Naive thymus-derived CD4-positive, alpha-beta T cell (primary cell): ENCODE measurements at regions of chr7 and their contacts with region 1.

Region 1: GRCh38 chr7:152336754-152337368 is 98.9 kb downstream of the KMT2C start:
- DNase-seq: peak in 7 of 9 donors; percentile 13 to 42 (median 34)
- ATAC-seq: peak; percentile 88
- H3K4me3 ChIP-seq: peak overlapping the region; percentile 27
- H3K4me3 Mint-ChIP-seq: peak overlapping the region in 8 of 10 donors; percentile 49 to 88 (median 84)
- H3K27ac ChIP-seq: peak overlapping the region; percentile 55
- H3K27ac Mint-ChIP-seq: peak overlapping the region in 8 of 9 donors; percentile 34 to 86 (median 73)
- H3K4me1 ChIP-seq: peaks cover 15 to 19% of the 10 kb centered on the region in 2 donors
- H3K4me1 Mint-ChIP-seq: peaks cover 38 to 85% (median 68%) of the 10 kb centered on the region in 7 donors
- H3K27me3 ChIP-seq: no peaks in the 10 kb centered on the region
- H3K27me3 Mint-ChIP-seq: no peaks in the 10 kb centered on the region

Region 2: GRCh38 chr7:152463709-152464311 is 126.9 kb after region 1 on chr7:
- CTCF ChIA-PET with region 1: interaction called, 4 read pairs
- POLR2A ChIA-PET with region 1: interaction called, 4 read pairs
- intact Hi-C with region 1: loop called (anchors 1 kb)
- DNase-seq: peak; percentile 99 to 100 (median 100)
- ATAC-seq: peak; percentile 96
- H3K4me3 ChIP-seq: peak overlapping the region; percentile 82
- H3K4me3 Mint-ChIP-seq: peak overlapping the region; percentile 64 to 96 (median 92)
- H3K27ac ChIP-seq: peak overlapping the region; percentile 99
- H3K27ac Mint-ChIP-seq: peak overlapping the region in 7 of 9 donors; percentile 62 to 93 (median 88)
- H3K4me1 ChIP-seq: peaks cover 5% of the 10 kb centered on the region in 2 donors
- H3K4me1 Mint-ChIP-seq: peaks cover 5 to 17% (median 7%) of the 10 kb centered on the region in 7 donors
- H3K27me3 ChIP-seq: no peaks in the 10 kb centered on the region
- H3K27me3 Mint-ChIP-seq: no peaks in the 10 kb centered on the region

Region 3: GRCh38 chr7:152512706-152513105 is 175.8 kb after region 1 on chr7:
- CTCF ChIA-PET with region 1: interaction called, 4 read pairs
- POLR2A ChIA-PET with region 1: interaction called, 3 read pairs
- intact Hi-C with region 1: loop called in 1 of 2 experiments (anchors 2 kb)
- DNase-seq: peak in 7 of 9 donors; percentile 19 to 54 (median 31)
- ATAC-seq: peak; percentile 79
- H3K4me3 ChIP-seq: peak overlapping the region; percentile 39
- H3K4me3 Mint-ChIP-seq: peak overlapping the region; percentile 58 to 87 (median 78)
- H3K27ac ChIP-seq: peak overlapping the region; percentile 2
- H3K27ac Mint-ChIP-seq: peak overlapping the region in 7 of 9 donors; percentile 15 to 77 (median 51)
- H3K4me1 ChIP-seq: peaks cover 0 to 4% of the 10 kb centered on the region in 2 donors
- H3K4me1 Mint-ChIP-seq: peaks cover 4 to 20% (median 13%) of the 10 kb centered on the region in 7 donors
- H3K27me3 ChIP-seq: no peaks in the 10 kb centered on the region
- H3K27me3 Mint-ChIP-seq: peaks cover 0 to 4% (median 0%) of the 10 kb centered on the region in 5 donors

Region 4: DNA sequence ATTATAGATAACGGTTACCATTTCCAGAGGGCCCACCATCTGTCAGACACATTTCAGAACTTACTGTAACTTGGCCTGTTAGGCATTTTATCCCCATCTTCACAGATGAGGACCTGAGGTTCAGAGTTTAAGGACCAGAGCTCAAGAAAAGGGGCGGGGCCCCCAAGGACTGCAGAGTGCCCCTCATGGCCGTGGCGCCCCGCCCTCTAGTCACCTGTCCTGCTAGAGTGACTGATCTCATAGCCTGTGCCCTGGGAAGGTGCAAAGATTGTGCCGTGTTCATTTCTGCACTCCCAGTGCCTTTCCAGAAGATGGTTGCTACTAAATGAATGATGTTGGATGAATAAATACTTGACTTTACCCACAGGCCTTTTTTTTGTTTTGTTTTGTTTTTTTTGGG is 232.1 kb after region 1 on chr7:
- CTCF ChIA-PET with region 1: no interaction called
- POLR2A ChIA-PET with region 1: no interaction called
- intact Hi-C with region 1: loop called in 1 of 2 experiments (anchors 5 kb)
- DNase-seq: no peak
- ATAC-seq: no peak
- H3K4me3 ChIP-seq: no peak overlapping the region
- H3K4me3 Mint-ChIP-seq: no peak overlapping the region
- H3K27ac ChIP-seq: no peak overlapping the region
- H3K27ac Mint-ChIP-seq: no peak overlapping the region
- H3K4me1 ChIP-seq: no peaks in the 10 kb centered on the region
- H3K4me1 Mint-ChIP-seq: peaks cover 0 to 19% (median 13%) of the 10 kb centered on the region in 7 donors
- H3K27me3 ChIP-seq: no peaks in the 10 kb centered on the region
- H3K27me3 Mint-ChIP-seq: peaks cover 0 to 11% (median 5%) of the 10 kb centered on the region in 5 donors

Region 5: GRCh38 chr7:152675759-152676636 is 339.1 kb after region 1 on chr7 and contains the start of gene XRCC2:
- CTCF ChIA-PET with region 1: no interaction called
- POLR2A ChIA-PET with region 1: no interaction called
- intact Hi-C with region 1: loop called in 1 of 2 experiments (anchors 1 kb)
- DNase-seq: peak; percentile 85 to 100 (median 97)
- ATAC-seq: peak; percentile 95
- H3K4me3 ChIP-seq: peak within 1 kb of the TSS; percentile 91
- H3K4me3 Mint-ChIP-seq: peak within 1 kb of the TSS; percentile 88 to 99 (median 94)
- H3K27ac ChIP-seq: peak within 1 kb of the TSS; percentile 87
- H3K27ac Mint-ChIP-seq: peak within 1 kb of the TSS; percentile 75 to 98 (median 91)
- H3K4me1 ChIP-seq: peaks cover 5 to 8% of the 10 kb centered on the region in 2 donors
- H3K4me1 Mint-ChIP-seq: peaks cover 9 to 22% (median 12%) of the 10 kb centered on the region in 7 donors
- H3K27me3 ChIP-seq: no peaks in the 10 kb centered on the region
- H3K27me3 Mint-ChIP-seq: no peaks in the 10 kb centered on the region
- total RNA-seq, gene XRCC2: 0.48 to 13.8 (median 1.2) TPM

Region 6: DNA sequence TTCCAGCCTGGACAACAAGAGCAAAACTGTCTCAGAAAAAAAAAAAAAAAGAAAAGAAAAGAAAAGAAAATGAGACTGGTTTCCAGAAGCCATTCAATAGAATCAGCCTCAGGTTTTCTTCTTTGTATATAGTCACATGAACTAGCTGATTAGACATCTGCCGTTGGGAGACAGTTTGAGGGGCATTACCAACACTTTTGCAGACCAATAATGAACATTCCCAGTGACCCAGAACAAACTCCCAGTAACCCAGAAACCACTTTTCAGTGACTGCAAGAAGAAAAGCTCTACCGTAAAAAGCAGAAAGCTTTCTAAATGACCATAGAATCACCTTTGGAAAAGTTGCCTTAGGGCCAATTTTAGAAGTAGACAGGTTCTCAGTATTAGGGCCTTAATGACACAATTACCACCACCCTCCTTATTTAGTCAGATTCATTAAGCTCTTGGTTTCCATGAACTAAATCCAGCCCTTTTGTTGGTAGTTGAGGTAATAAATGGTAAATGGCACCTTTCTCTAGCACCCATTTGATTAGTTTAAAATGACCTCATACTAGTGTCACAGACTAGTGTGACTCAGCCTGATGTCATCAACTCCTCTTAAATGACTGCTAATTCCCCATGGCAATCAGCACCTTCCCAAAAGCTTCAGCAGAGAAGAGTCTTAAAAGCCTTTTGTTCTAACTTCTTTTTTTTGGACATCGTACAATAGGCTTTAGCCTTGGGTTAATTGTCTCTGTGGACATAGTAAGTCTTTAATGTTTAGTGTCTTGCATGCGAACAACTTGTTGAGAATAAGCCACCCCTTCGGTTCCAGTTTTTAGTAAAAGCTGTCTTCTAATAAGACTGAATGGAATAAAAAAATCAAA is 372.7 kb after region 1 on chr7:
- CTCF ChIA-PET with region 1: interaction called, 17 read pairs
- POLR2A ChIA-PET with region 1: interaction called, 3 read pairs
- intact Hi-C with region 1: loop called (anchors 1 to 2 kb)
- DNase-seq: no peak
- ATAC-seq: no peak
- H3K4me3 ChIP-seq: no peak overlapping the region
- H3K4me3 Mint-ChIP-seq: no peak overlapping the region
- H3K27ac ChIP-seq: no peak overlapping the region
- H3K27ac Mint-ChIP-seq: no peak overlapping the region
- H3K4me1 ChIP-seq: no peaks in the 10 kb centered on the region
- H3K4me1 Mint-ChIP-seq: peaks cover 0 to 9% (median 3%) of the 10 kb centered on the region in 7 donors
- H3K27me3 ChIP-seq: no peaks in the 10 kb centered on the region
- H3K27me3 Mint-ChIP-seq: peaks cover 0 to 3% (median 0%) of the 10 kb centered on the region in 5 donors